GM18951 (cell line): ENCODE measurements at regions of chr10 and their contacts with region 1.

Region 1: DNA sequence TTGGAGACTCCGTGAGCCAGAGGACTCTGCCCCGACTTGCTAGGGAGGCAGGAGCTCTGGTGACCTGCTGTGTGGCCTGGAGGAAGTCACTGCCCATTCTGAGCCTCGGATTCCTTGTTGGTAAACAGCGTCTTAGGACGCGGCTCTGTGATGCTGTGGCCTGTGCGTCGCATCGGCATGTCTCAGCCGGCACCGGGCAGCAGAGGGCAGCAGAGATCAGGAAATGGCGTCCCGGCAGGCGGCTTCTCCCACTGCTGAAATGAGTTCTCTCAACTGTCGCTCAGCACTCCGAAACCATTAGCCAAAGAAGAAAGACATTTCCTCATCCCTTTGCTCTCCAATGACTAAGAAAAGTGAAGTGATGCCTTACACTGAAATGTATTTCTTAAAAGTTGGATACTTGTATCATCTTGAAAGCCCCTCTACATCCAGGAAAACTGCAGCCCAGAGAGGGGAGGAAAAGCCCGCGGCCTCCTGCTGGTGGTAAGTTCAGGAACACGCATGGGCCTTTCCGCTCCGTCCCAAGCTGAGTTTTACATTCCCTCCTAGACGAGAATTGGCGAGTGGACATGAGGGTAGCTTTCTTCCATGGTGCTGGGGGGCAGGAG is 91.7 kb downstream of the WDR11 start:
- POLR2A ChIP-seq: no peak

Region 2: DNA sequence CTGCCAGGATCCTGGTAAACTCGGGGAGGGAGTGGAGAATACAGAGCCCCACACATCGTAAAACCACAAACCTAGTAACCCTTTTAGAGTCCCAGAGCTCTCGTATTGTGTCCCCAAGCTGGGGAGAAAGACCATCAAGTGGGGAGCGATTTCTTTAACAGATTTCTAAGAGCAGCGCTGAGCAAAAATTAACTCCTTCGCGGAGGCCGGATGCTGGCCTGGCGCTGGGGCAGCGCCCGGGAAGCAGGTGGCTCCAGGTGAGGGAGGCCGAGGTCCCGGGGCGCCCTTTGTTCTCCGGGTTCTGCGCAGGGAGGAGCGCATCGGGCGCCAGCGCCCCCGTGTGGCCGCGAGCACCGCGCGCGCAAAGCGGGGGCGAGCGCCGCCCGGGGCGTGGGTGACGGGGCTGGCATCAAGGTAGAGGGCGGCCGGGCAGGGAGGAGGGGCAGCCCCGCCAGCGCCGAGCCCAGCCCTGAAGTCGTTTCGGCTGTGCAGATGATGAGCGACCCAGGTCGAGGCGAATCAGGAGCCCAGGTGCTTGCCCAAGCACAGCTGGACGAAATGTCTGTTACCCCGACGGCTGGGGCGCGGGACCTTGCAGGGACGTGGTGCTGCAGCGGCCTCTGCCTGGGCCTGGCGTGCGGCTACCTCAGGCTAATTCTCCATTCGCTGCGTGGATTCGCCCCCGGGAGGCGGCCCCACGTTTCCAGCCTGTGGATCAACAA is 665.7 kb after region 1 on chr10:
- in situ Hi-C with region 1: loop called (anchors 25 kb)
- POLR2A ChIP-seq: no peak

Region 3: DNA sequence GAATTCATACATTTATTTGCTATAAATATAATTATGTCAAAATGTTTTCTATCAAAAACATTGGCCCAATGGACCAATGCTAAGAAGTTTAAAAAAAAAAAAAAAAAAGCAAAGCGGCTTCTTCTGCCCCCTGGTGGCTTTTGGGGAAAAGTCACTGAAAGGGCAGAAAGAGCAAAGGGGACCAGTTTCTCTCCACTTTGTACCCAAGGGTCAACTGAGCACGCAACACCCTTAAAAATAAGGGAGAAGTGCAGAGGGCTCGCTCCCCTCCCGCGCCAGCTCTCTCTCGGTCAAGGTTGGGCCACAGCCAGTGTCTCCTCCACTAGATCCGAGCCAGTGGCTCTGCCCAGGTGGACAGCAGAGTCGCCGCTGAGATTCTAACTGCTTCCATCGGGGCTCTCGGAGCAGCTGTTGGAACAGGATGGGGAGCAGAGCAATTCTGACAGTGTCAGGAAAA is 791.7 kb after region 1 on chr10:
- in situ Hi-C with region 1: loop called (anchors 25 kb)
- POLR2A ChIP-seq: no peak

Region 4: DNA sequence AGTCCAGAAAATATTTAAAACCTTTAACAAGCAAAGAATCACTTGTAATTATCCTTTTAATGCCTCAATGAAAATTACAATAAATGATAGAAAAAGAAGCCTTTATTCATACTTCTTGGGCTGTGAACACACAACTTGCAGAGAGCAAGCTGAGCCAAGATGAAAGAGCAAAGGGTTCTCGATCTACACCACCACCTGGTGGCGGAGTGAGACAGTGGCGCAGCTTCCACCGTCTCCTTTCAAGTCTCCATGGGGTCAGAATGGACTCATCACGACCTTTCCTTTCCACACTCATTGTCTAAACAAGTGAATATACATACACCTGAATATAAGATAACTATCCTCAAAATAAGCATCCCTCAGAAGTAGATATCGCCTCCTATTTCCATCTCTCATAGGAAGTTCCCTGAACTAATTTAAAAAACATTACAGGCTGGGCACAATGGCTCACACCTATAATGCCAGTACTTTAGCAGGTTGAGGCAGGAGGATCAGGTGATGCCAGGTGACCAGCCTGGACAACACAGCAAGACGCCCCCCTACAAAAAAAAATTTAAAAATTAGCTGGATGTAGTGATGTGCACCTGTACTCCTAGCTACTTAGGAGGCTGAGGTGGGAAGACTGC is 944.2 kb after region 1 on chr10:
- in situ Hi-C with region 1: loop called (anchors 25 kb)
- POLR2A ChIP-seq: no peak